ENCODE measurements at regions of chr1 and their contacts with region 1.

Region 1: GRCh38 chr1:167066333-167067122 is 23.6 kb downstream of the GPA33 start:
- DNase-seq: peak; percentile 76
- ATAC-seq: peak; percentile 94
- H3K4me3 Mint-ChIP-seq: no peak overlapping the region
- H3K27ac Mint-ChIP-seq: no peak overlapping the region
- H3K4me1 Mint-ChIP-seq: no peaks in the 10 kb centered on the region
- H3K27me3 Mint-ChIP-seq: no peaks in the 10 kb centered on the region
- CTCF ChIP-seq: peak; percentile 70

Region 2: GRCh38 chr1:167121375-167122120 is 55.0 kb after region 1 on chr1:
- CTCF ChIA-PET with region 1: interaction called, 7 read pairs
- POLR2A ChIA-PET with region 1: no interaction called
- intact Hi-C with region 1: loop called (anchors 1 kb)
- DNase-seq: no peak
- ATAC-seq: no peak
- H3K4me3 Mint-ChIP-seq: peak overlapping the region; percentile 80
- H3K27ac Mint-ChIP-seq: no peak overlapping the region
- H3K4me1 Mint-ChIP-seq: peaks cover 5% of the 10 kb centered on the region
- H3K27me3 Mint-ChIP-seq: peaks cover 33% of the 10 kb centered on the region
- CTCF ChIP-seq: no peak

Region 3: DNA sequence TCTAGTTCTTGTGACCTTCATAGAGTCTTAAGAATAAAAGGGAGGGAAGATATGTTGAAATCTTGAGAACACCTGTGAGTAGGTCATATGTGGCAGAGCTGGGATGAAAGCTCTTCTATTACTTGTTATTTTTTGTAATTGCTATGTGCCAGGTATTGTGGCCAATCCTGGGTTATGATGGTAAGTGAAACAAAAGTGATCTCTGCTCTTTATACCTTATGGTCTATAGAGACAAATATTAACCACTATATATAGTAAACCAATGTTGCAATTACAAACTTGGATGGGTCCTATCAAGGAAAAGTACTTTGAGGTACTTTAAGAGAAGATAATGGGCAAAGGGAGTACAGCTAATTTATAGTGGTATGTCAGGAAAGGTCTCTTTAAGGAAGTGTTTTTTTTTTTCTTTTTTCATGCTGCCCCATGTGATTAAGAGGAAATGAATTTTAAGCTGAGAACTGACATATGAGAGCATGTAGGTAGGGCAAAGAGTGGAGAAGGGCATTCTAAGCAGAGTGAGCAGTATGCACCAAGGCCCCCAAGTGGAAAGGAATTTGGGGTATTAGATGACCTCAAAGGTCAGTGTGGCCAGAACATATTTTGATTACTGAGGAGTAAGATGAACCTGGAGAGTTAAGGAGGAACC is 197.4 kb after region 1 on chr1:
- CTCF ChIA-PET with region 1: interaction called, 4 read pairs
- POLR2A ChIA-PET with region 1: no interaction called
- intact Hi-C with region 1: loop called (anchors 2 kb)
- DNase-seq: no peak
- ATAC-seq: peak; percentile 43
- H3K4me3 Mint-ChIP-seq: no peak overlapping the region
- H3K27ac Mint-ChIP-seq: no peak overlapping the region
- H3K4me1 Mint-ChIP-seq: peaks cover 12% of the 10 kb centered on the region
- H3K27me3 Mint-ChIP-seq: no peaks in the 10 kb centered on the region
- CTCF ChIP-seq: no peak

Region 4: GRCh38 chr1:167342846-167343245 is 276.3 kb after region 1 on chr1:
- CTCF ChIA-PET with region 1: interaction called, 6 read pairs
- POLR2A ChIA-PET with region 1: no interaction called
- intact Hi-C with region 1: loop called (anchors 1 kb)
- DNase-seq: no peak
- ATAC-seq: peak; percentile 70
- H3K4me3 Mint-ChIP-seq: no peak overlapping the region
- H3K27ac Mint-ChIP-seq: no peak overlapping the region
- H3K4me1 Mint-ChIP-seq: peaks cover 17% of the 10 kb centered on the region
- H3K27me3 Mint-ChIP-seq: no peaks in the 10 kb centered on the region
- CTCF ChIP-seq: no peak

Region 5: DNA sequence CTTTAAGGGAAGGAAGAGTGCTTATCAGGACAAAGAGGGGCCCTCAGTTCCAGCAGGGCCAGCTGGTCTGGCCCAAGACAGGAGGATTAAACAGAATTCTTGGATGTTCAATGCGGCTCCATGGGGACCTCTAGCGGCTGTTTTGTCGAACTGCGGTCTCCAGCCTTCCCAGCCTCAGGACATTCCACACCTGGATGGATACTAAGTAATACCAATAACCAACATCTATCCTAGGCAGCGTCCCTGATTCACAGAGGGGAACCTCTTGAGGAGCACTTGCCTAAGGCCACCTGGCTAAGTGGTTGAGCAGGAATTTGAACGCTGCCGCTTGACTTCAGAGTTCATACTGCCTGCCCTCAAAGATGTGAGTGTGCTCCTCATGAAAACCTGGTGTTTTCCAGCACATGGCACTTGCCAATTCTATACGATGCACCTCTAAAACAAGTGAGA is 467.3 kb after region 1 on chr1:
- CTCF ChIA-PET with region 1: interaction called, 7 read pairs
- POLR2A ChIA-PET with region 1: no interaction called
- intact Hi-C with region 1: loop called (anchors 1 kb)
- DNase-seq: peak; percentile 36
- ATAC-seq: peak; percentile 78
- H3K4me3 Mint-ChIP-seq: no peak overlapping the region
- H3K27ac Mint-ChIP-seq: no peak overlapping the region
- H3K4me1 Mint-ChIP-seq: peaks cover 4% of the 10 kb centered on the region
- H3K27me3 Mint-ChIP-seq: no peaks in the 10 kb centered on the region
- CTCF ChIP-seq: no peak

Region 6: DNA sequence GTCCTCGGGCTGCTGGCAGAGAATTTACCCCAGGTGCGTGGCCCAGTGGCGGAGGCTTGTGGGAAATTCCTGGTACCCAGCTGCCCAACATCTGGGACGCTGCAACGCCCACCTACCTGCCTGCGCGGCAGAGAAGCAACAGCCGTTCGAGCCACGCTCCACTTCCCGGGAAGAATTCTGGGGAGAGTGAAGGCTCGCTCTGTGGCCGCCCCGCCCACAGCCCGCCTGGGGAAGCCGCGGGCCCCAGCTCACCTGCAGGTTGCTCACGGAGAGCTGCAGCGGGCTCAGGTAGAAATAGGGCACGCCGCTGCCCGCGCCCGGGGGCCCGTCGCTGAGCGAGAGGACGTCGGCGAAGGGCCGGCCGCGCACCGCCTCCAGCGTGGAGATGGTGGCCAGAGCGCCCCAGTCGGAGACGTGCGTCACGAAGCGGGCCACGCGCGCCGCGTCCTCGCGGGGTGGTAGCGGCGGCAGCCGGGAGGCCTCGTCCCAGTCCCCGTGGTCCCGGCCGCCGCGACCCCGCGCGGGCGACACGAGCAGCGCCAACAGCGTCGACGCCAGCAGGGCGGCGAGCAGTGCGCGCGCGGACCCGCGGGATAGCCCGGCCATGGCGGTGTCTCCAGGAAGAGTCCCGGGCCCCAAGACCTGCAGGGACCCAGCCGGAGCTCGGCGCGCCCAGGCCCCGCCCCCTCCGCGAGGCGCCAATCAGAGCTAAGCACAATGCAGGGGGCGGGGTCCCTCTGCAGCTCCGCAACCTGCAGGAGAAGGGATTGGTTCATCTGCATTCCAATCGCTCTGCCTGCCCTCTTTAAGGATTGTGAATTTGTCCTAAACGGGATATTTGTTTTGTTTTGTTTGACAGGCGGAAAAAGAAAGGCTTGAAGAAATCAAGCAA is 486.9 kb after region 1 on chr1 and contains the start of gene CREG1:
- CTCF ChIA-PET with region 1: interaction called, 10 read pairs
- POLR2A ChIA-PET with region 1: no interaction called
- intact Hi-C with region 1: loop called (anchors 1 kb)
- DNase-seq: peak; percentile 84
- ATAC-seq: peak; percentile 99
- H3K4me3 Mint-ChIP-seq: peak within 1 kb of the TSS; percentile 86
- H3K27ac Mint-ChIP-seq: peak within 1 kb of the TSS; percentile 41
- H3K4me1 Mint-ChIP-seq: peaks cover 19% of the 10 kb centered on the region
- H3K27me3 Mint-ChIP-seq: no peaks in the 10 kb centered on the region
- CTCF ChIP-seq: no peak
- total RNA-seq, gene CREG1: 3.1 and 3.8 TPM in 2 replicates

Measured in activated B cell treated with CpG ODN at 0.5 μM for 24 hours (primary cell).